Lower leg skin (tissue), 4 donors: ENCODE measurements at regions of chr2 and their contacts with region 1.

Region 1: GRCh38 chr2:130830538-130830937 is 6.2 kb upstream of the ARHGEF4 start:
- DNase-seq: no peak
- H3K4me3 ChIP-seq: no peak overlapping the region
- CTCF ChIP-seq: no peak
- POLR2A ChIP-seq: no peak

Region 2: GRCh38 chr2:130814931-130815680 is 15.4 kb before region 1 on chr2:
- intact Hi-C with region 1: loop called (anchors 1 kb)
- DNase-seq: peak in 1 of 2 donors; percentile 36
- H3K4me3 ChIP-seq: no peak overlapping the region
- CTCF ChIP-seq: no peak
- POLR2A ChIP-seq: no peak

Region 3: GRCh38 chr2:130873700-130874346 is 43.3 kb after region 1 on chr2:
- intact Hi-C with region 1: no loop called
- DNase-seq: peak; percentile 56 to 88
- H3K4me3 ChIP-seq: no peak overlapping the region
- CTCF ChIP-seq: no peak
- POLR2A ChIP-seq: no peak

Region 4: GRCh38 chr2:130920415-130921163 is 90.1 kb after region 1 on chr2:
- intact Hi-C with region 1: no loop called
- DNase-seq: peak; percentile 71 to 93
- H3K4me3 ChIP-seq: no peak overlapping the region
- CTCF ChIP-seq: no peak
- POLR2A ChIP-seq: no peak